ENCODE measurements at regions of chr3 and their contacts with region 1.

Region 1: GRCh38 chr3:32334675-32335074 is 57.0 kb upstream of the CMTM7 start:
- DNase-seq: peak; percentile 79
- H3K4me3 Mint-ChIP-seq: no peak overlapping the region
- H3K27ac Mint-ChIP-seq: peak overlapping the region; percentile 10
- H3K4me1 Mint-ChIP-seq: peaks cover 49% of the 10 kb centered on the region
- H3K27me3 Mint-ChIP-seq: no peaks in the 10 kb centered on the region

Region 2: DNA sequence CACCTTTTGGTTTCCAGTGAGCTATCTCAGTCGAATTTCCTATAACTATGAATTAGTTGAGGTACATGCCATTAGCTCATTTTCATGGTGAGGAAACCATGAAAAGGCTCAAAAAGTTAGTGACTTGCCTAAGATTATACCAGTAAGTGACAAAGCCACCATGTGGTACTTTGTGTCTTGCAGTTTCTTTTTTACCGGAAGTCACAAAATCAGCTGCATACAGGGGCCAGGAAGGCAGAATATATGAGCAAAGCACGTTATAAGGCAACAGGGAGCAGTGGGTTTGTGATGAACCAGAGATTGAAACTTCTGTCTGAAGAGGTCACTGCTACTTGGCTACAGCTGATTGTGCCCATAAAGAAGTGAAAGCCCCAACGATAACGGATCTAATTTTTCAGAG is 45.9 kb before region 1 on chr3:
- CTCF ChIA-PET with region 1: interaction called, 124 read pairs
- DNase-seq: peak; percentile 34
- H3K4me3 Mint-ChIP-seq: no peak overlapping the region
- H3K27ac Mint-ChIP-seq: peak overlapping the region; percentile 84
- H3K4me1 Mint-ChIP-seq: peaks cover 41% of the 10 kb centered on the region
- H3K27me3 Mint-ChIP-seq: no peaks in the 10 kb centered on the region

Region 3: DNA sequence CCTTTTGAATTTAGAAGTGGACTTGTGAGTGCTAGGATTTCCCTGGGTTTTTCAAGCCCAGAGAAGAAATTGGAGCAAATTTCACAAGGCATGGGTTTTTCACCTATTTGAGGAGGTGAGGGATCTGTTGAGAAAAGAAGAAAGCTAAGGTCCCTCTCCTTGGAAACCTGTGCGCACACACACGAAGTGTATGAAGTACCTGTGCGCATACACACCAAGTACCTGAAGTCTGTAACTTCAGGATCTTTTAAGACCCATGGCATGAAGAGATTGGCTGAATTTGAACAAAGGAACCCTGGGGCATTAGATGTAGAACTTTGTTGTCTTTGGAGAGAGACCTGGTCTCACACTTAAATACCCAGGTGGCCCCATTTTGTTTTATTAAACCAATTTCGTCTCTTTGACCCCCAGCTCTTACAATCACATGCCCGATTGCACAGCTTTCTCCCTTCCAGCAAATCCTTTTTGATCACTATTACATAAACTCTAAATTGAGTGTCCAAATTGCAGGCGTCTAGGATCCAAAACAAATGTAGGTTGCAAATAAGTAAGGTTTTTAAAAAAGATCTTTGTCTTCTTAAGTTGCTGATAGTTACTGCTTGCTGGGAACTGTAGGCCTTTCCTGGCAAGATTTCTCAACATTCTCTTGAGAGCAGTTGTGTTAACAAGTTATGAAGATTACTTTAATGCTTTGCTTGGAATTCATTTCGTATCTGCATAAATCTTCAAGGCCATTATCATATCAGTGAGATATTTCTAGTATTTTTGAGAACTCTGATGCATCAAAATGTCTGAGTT is 31.9 kb before region 1 on chr3:
- CTCF ChIA-PET with region 1: interaction called, 124 read pairs
- DNase-seq: no peak
- H3K4me3 Mint-ChIP-seq: peak overlapping the region; percentile 47
- H3K27ac Mint-ChIP-seq: peak overlapping the region; percentile 94
- H3K4me1 Mint-ChIP-seq: peaks cover 60% of the 10 kb centered on the region
- H3K27me3 Mint-ChIP-seq: no peaks in the 10 kb centered on the region

Region 4: GRCh38 chr3:32347343-32348125 is 12.9 kb after region 1 on chr3:
- CTCF ChIA-PET with region 1: interaction called, 15 read pairs
- DNase-seq: no peak
- H3K4me3 Mint-ChIP-seq: no peak overlapping the region
- H3K27ac Mint-ChIP-seq: no peak overlapping the region
- H3K4me1 Mint-ChIP-seq: peaks cover 11% of the 10 kb centered on the region
- H3K27me3 Mint-ChIP-seq: no peaks in the 10 kb centered on the region